GM12878 (cell line): ENCODE measurements at regions of chr1 and their contacts with region 1.

Region 1: GRCh38 chr1:17661546-17662157 is 93.5 kb upstream of the ACTL8 start:
- DNase-seq: no peak
- ATAC-seq: peak; percentile 84
- H3K4me3 ChIP-seq: no peak overlapping the region
- H3K27ac ChIP-seq: no peak overlapping the region
- H3K4me1 ChIP-seq: no peaks in the 10 kb centered on the region
- H3K27me3 ChIP-seq: no peaks in the 10 kb centered on the region; a peak in 1 of 4 replicates
- CTCF ChIP-seq: peak; percentile 78 to 82 (median 81)
- EP300 ChIP-seq: no peak
- POLR2A ChIP-seq: no peak
- RAD21 ChIP-seq: peak; percentile 79

Region 2: GRCh38 chr1:17671741-17672140 is 10.1 kb after region 1 on chr1:
- CTCF ChIA-PET with region 1: interaction called, 10 read pairs
- POLR2A ChIA-PET with region 1: no interaction called
- RAD21 ChIA-PET with region 1: no interaction called
- SMC1A ChIA-PET with region 1: no interaction called
- in situ Hi-C with region 1: no loop called
- intact Hi-C with region 1: no loop called
- DNase-seq: no peak
- ATAC-seq: peak; percentile 59
- H3K4me3 ChIP-seq: no peak overlapping the region
- H3K27ac ChIP-seq: no peak overlapping the region
- H3K4me1 ChIP-seq: no peaks in the 10 kb centered on the region
- H3K27me3 ChIP-seq: no peaks in the 10 kb centered on the region
- CTCF ChIP-seq: 0 out of 6 replicates have a peak, but pooled peaks of 1 of the 3 experiments have one; percentile 6
- EP300 ChIP-seq: no peak
- POLR2A ChIP-seq: no peak
- RAD21 ChIP-seq: no peak

Region 3: GRCh38 chr1:17744666-17745478 is 83.2 kb after region 1 on chr1:
- CTCF ChIA-PET with region 1: interaction called, 12 read pairs
- POLR2A ChIA-PET with region 1: no interaction called
- RAD21 ChIA-PET with region 1: no interaction called
- SMC1A ChIA-PET with region 1: no interaction called
- in situ Hi-C with region 1: no loop called
- intact Hi-C with region 1: no loop called
- DNase-seq: no peak
- ATAC-seq: no peak
- H3K4me3 ChIP-seq: no peak overlapping the region
- H3K27ac ChIP-seq: no peak overlapping the region
- H3K4me1 ChIP-seq: no peaks in the 10 kb centered on the region
- H3K27me3 ChIP-seq: no peaks in the 10 kb centered on the region; a peak in 3 of 4 replicates
- CTCF ChIP-seq: no peak
- EP300 ChIP-seq: no peak
- POLR2A ChIP-seq: no peak
- RAD21 ChIP-seq: no peak

Region 4: GRCh38 chr1:17776426-17776825 is 114.8 kb after region 1 on chr1:
- CTCF ChIA-PET with region 1: no interaction called
- POLR2A ChIA-PET with region 1: no interaction called
- RAD21 ChIA-PET with region 1: no interaction called
- SMC1A ChIA-PET with region 1: no interaction called
- in situ Hi-C with region 1: no loop called
- intact Hi-C with region 1: no loop called
- DNase-seq: no peak
- ATAC-seq: no peak
- H3K4me3 ChIP-seq: no peak overlapping the region
- H3K27ac ChIP-seq: no peak overlapping the region
- H3K4me1 ChIP-seq: no peaks in the 10 kb centered on the region
- H3K27me3 ChIP-seq: peaks cover 0 to 3% of the 10 kb centered on the region in 2 experiments; a peak in 1 of 4 replicates
- CTCF ChIP-seq: no peak
- EP300 ChIP-seq: no peak
- POLR2A ChIP-seq: no peak
- RAD21 ChIP-seq: no peak

Region 5: DNA sequence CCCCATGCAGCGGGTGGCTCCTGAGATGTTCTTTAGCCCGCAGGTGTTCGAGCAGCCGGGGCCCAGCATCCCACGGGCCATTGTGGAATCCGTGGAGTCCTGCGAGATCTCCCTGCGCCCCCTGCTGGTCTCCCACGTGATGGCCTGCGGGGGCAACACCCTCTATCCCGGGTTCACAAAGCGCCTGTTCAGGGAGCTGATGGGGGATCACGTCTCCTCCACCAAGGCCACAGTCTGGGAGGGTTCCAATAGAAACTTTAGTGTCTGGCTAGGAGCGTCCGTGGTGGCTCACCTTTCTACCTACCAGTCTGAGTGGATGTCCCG is 164.5 kb after region 1 on chr1:
- CTCF ChIA-PET with region 1: interaction called, 16 read pairs
- POLR2A ChIA-PET with region 1: no interaction called
- RAD21 ChIA-PET with region 1: interaction called, 3 read pairs
- SMC1A ChIA-PET with region 1: interaction called, 3 read pairs
- in situ Hi-C with region 1: no loop called
- intact Hi-C with region 1: loop called (anchors 1 kb)
- DNase-seq: no peak
- ATAC-seq: peak; percentile 49
- H3K4me3 ChIP-seq: no peak overlapping the region
- H3K27ac ChIP-seq: no peak overlapping the region
- H3K4me1 ChIP-seq: no peaks in the 10 kb centered on the region
- H3K27me3 ChIP-seq: no peaks in the 10 kb centered on the region; a peak in 1 of 4 replicates
- CTCF ChIP-seq: peak; percentile 41 to 64 (median 59)
- EP300 ChIP-seq: no peak
- POLR2A ChIP-seq: no peak
- RAD21 ChIP-seq: 0 out of 2 replicates have a peak, but pooled peaks have one; percentile 21

Region 6: DNA sequence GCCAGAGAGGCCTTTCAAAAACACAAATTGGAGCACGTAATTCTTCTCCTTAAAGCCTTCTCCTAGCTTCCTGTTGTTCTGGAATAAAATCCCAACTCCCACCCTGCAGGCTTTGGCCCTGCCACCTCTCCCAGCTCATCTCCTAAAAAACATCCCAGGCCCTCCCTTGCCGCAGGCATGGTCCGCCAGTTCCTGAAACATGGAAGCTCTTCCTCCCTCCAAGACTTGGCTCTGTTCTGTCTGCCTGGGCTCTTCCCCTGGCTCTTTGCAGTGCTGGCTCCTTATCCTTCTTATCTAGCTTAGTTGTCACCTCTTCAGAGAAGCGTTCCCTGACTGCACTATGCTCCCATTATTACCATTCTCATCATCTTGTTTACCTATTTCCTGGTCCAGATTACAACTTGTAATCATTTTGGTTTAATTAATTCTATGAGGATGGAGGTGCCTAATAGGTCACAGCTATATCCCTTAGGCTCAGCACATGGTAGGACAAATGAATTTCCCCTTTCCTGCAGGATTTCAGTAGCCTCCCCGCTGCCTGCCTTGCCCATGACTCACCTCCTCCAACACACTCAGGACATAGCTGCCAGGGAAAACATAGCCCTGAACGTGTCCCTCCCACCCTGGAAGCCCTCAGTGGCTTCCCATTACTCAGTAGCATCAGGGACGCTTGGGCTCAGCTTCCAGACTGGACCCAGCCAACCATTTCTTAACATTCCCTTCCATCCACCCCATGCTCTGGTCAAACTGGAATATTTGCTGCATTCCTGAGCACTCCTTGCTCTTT is 430.2 kb after region 1 on chr1:
- CTCF ChIA-PET with region 1: no interaction called
- POLR2A ChIA-PET with region 1: no interaction called
- RAD21 ChIA-PET with region 1: interaction called, 4 read pairs
- SMC1A ChIA-PET with region 1: no interaction called
- in situ Hi-C with region 1: loop called (anchors 10 kb)
- intact Hi-C with region 1: no loop called
- DNase-seq: no peak
- ATAC-seq: no peak
- H3K4me3 ChIP-seq: no peak overlapping the region
- H3K27ac ChIP-seq: no peak overlapping the region
- H3K4me1 ChIP-seq: no peaks in the 10 kb centered on the region
- H3K27me3 ChIP-seq: peaks cover 0 to 2% of the 10 kb centered on the region in 2 experiments; a peak in 3 of 4 replicates
- CTCF ChIP-seq: no peak
- EP300 ChIP-seq: no peak
- POLR2A ChIP-seq: no peak
- RAD21 ChIP-seq: no peak

Region 7: GRCh38 chr1:18100491-18101063 is 438.9 kb after region 1 on chr1:
- CTCF ChIA-PET with region 1: interaction called, 15 read pairs
- POLR2A ChIA-PET with region 1: no interaction called
- RAD21 ChIA-PET with region 1: interaction called, 8 read pairs
- SMC1A ChIA-PET with region 1: interaction called, 3 read pairs
- in situ Hi-C with region 1: loop called (anchors 10 kb)
- intact Hi-C with region 1: loop called (anchors 2 kb)
- DNase-seq: peak; percentile 5
- ATAC-seq: peak; percentile 48
- H3K4me3 ChIP-seq: no peak overlapping the region
- H3K27ac ChIP-seq: no peak overlapping the region
- H3K4me1 ChIP-seq: no peaks in the 10 kb centered on the region
- H3K27me3 ChIP-seq: peaks cover 0 to under 1% of the 10 kb centered on the region in 2 experiments; a peak in 2 of 4 replicates
- CTCF ChIP-seq: peak; percentile 72 to 85 (median 73)
- EP300 ChIP-seq: no peak
- POLR2A ChIP-seq: no peak
- RAD21 ChIP-seq: peak; percentile 56; the same call in 1 of the 2 replicates

Region 8: DNA sequence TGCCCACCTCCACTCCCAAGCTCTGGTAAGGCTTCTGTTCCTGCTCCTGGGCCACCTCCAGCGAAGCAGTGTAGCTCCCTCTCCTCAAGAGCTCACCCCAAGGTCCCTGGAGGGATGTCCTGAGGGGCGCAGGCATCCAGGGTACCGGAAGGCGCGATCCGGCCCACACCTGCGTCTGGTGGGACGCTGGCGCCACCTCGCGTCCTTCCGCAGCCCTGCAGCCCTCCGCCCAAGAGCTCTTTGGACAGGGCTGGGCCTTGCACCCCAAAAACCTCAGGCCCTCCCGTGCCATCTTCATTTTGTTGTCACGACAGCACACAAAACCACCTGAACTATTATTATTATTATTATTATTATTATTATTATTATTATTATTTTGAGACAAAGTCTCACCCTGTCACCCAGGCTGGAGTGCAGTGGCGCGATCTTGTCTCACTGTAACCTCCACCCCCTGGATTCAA is 919.8 kb after region 1 on chr1:
- CTCF ChIA-PET with region 1: interaction called, 8 read pairs
- POLR2A ChIA-PET with region 1: no interaction called
- RAD21 ChIA-PET with region 1: interaction called, 7 read pairs
- SMC1A ChIA-PET with region 1: no interaction called
- in situ Hi-C with region 1: no loop called
- intact Hi-C with region 1: loop called (anchors 10 kb)
- DNase-seq: no peak
- ATAC-seq: peak; percentile 87
- H3K4me3 ChIP-seq: no peak overlapping the region
- H3K27ac ChIP-seq: no peak overlapping the region
- H3K4me1 ChIP-seq: no peaks in the 10 kb centered on the region
- H3K27me3 ChIP-seq: no peaks in the 10 kb centered on the region
- CTCF ChIP-seq: peak; percentile 74 to 92 (median 81)
- EP300 ChIP-seq: no peak
- POLR2A ChIP-seq: no peak
- RAD21 ChIP-seq: peak; percentile 75